ENCODE measurements at regions of chr1 and their contacts with region 1.

Region 1: GRCh38 chr1:170685166-170685565 is 21.2 kb downstream of the PRRX1 start:
- H3K4me3 Mint-ChIP-seq: no peak overlapping the region
- H3K27ac Mint-ChIP-seq: no peak overlapping the region
- H3K4me1 Mint-ChIP-seq: no peaks in the 10 kb centered on the region
- H3K27me3 Mint-ChIP-seq: peaks cover 8% of the 10 kb centered on the region

Region 2: DNA sequence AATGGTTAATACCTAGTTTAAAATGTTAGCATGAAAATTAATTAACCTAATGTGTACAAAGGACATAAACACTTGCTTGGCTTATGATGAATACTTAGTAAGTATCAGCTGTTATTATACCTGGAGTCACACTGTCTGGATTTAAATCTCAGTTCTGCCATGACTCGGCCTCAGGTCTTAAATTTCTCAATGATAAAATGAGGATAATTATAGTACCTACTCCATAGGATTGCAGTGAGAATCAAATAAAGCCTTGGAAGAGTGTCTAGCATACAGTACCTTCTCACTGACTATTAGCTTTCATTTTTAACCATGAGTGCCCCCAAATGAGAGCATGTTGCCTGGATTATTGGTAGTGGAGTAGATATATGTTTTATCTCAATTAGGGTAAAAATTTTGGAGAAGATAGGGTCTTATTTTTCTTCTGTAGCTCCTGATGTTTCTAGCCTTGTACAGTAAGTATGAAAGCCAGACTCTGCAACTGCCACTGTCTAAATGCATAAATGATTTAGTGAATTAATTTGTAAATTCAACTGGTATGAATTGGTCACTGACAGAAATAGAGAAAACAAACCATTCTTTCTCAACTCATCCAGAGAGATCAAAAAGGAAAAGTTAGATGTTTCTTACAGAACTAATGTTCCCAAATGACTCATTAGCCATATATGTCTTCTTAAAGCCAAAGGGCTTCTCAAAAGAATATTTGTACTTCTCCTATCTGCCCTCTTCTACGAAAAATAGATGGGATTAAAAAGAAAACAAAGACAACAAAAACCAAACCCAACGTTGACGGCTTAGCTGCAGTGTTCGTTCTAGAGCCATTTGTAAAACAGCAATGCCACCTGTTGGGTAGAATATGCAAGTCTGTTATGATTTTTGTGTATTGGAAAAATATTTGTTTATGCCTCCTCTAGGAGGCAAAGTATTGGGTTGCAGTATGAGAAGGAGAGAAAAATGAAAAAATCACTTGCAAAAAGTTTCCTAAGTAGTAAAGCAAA is 196.4 kb after region 1 on chr1:
- intact Hi-C with region 1: loop called (anchors 2 kb)
- H3K4me3 Mint-ChIP-seq: no peak overlapping the region
- H3K27ac Mint-ChIP-seq: no peak overlapping the region
- H3K4me1 Mint-ChIP-seq: no peaks in the 10 kb centered on the region
- H3K27me3 Mint-ChIP-seq: no peaks in the 10 kb centered on the region

Measured in dendritic cell treated with granulocyte-macrophage colony-stimulating factor and Interleukin-4, amounts not matched to agents 40 ng/mL and 50 ng/mL, for 4 days (primary cell).